Activated naive CD4-positive, alpha-beta T cell treated with anti-CD3 and anti-CD28 coated beads for 36 hours (primary cell): ENCODE measurements at regions of chr15 and their contacts with region 1.

Region 1: DNA sequence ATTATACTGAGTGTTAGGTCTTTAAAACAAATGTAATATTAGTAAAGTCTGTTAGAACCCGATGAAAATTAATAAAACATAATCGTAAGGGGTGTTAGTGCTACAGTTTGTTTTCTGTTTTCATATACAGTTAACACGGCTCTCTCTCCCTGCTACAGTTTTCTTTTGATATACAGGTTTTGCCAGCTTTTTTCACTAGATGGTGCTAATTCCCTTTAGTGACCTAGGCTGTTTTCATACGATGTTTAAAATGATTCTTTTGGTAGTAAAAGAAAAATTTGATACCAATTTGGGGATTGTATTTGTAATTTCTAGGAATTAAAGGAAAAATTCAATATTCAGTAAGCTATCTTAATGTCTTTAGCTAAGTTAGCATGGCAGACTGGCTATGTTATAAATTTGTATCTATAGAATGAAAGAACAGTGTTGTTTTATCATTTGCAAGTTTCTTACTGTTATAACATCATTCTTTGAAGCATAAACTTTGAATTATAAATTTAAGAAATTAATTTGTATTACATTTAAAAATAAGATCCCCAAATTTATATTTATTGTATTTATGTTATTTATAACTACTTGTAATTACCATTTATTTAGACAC is 11.5 kb downstream of the APH1B start:
- DNase-seq: no peak
- H3K4me3 Mint-ChIP-seq: no peak overlapping the region
- H3K27ac Mint-ChIP-seq: no peak overlapping the region
- H3K4me1 Mint-ChIP-seq: peaks cover 4% of the 10 kb centered on the region
- H3K27me3 Mint-ChIP-seq: no peaks in the 10 kb centered on the region

Region 2: GRCh38 chr15:62880278-62880677 is 408.6 kb before region 1 on chr15:
- CTCF ChIA-PET with region 1: no interaction called
- intact Hi-C with region 1: no loop called
- DNase-seq: no peak
- H3K4me3 Mint-ChIP-seq: no peak overlapping the region
- H3K27ac Mint-ChIP-seq: no peak overlapping the region
- H3K4me1 Mint-ChIP-seq: peaks cover 9% of the 10 kb centered on the region
- H3K27me3 Mint-ChIP-seq: peaks cover 7% of the 10 kb centered on the region

Region 3: GRCh38 chr15:63166219-63166618 is 122.7 kb before region 1 on chr15:
- CTCF ChIA-PET with region 1: no interaction called
- intact Hi-C with region 1: loop called (anchors 2 kb)
- DNase-seq: no peak
- H3K4me3 Mint-ChIP-seq: no peak overlapping the region
- H3K27ac Mint-ChIP-seq: no peak overlapping the region
- H3K4me1 Mint-ChIP-seq: peaks cover 4% of the 10 kb centered on the region
- H3K27me3 Mint-ChIP-seq: no peaks in the 10 kb centered on the region

Region 4: DNA sequence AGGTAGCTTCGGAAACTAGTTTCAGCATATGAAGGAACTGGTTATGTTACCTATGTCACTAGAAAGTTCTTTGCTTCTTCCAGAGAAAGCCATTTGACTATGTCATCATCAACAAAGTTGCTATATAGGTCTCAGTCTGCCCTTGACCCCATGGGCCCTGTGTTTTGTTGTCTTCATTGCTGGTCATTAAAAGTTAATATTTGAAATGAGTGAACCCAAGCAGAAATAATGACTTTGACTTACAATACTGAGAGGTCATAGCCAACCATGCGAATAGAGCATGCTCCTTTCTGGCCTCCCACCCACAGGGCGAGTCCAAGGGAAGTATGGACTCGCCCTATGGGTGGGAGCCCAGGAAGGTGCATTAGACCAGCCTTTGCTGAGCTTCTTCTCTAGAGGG is 29.5 kb after region 1 on chr15:
- CTCF ChIA-PET with region 1: no interaction called
- intact Hi-C with region 1: no loop called
- DNase-seq: no peak
- H3K4me3 Mint-ChIP-seq: no peak overlapping the region
- H3K27ac Mint-ChIP-seq: no peak overlapping the region
- H3K4me1 Mint-ChIP-seq: no peaks in the 10 kb centered on the region
- H3K27me3 Mint-ChIP-seq: no peaks in the 10 kb centered on the region

Region 5: DNA sequence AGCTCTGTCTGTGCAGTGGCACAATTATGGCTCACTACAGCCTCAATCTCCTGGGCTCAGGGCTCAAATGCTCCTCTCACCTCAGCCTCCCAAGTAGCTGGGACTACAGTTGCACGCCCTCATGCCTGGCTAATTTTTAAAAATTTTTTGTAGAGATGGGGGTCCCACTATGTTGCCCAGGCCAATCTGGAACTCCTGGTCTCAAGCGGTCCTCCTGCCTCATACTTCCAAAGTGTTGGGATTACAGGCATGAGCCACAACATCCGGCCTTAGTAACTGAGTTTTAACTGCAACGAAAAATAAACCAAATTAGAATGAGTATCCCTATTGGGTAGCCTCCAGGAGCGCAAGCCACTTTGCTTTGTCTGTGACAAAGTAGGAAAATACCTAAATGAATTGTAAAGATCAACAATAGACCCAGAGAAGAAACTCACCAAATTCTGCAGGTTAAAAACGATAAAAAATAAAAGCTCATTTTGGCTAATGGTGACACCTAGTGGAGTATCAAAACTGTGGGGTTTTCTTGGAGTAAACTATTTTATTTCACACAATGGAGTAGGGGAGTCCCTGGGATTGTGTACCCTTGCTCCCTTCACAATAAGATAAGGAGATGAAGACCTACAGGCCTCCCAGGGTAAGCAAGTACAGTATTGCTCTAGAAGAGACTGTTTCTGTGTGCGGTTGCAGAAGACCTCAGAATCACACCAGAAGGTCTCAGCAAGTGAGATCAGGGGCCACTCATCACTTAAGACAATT is 113.8 kb after region 1 on chr15:
- CTCF ChIA-PET with region 1: interaction called, 20 read pairs
- intact Hi-C with region 1: loop called (anchors 1 kb)
- DNase-seq: no peak
- H3K4me3 Mint-ChIP-seq: no peak overlapping the region
- H3K27ac Mint-ChIP-seq: no peak overlapping the region
- H3K4me1 Mint-ChIP-seq: peaks cover 5% of the 10 kb centered on the region
- H3K27me3 Mint-ChIP-seq: no peaks in the 10 kb centered on the region

Region 6: DNA sequence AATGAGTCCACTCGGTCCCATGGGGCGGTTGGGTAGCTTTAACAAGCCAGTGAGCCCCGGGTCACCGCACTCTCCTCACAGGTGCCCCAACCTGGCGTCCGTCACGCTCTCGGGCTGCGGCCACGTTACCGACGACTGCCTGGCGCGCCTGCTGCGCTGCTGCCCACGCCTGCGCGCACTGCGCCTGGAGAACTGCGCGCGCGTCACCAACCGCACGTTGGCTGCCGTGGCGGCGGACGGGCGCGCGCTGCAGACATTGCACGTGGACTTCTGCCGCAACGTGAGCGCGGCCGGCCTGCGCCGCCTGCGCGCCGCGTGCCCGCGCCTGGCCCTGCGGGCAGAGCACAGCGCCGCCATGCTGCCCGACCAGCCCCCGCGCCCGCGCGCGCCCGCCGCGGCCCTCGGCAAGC is 311.7 kb after region 1 on chr15:
- CTCF ChIA-PET with region 1: interaction called, 3 read pairs
- intact Hi-C with region 1: loop called (anchors 2 kb)
- DNase-seq: peak; percentile 87
- H3K4me3 Mint-ChIP-seq: peak overlapping the region; percentile 90
- H3K27ac Mint-ChIP-seq: peak overlapping the region; percentile 93
- H3K4me1 Mint-ChIP-seq: peaks cover 54% of the 10 kb centered on the region
- H3K27me3 Mint-ChIP-seq: no peaks in the 10 kb centered on the region